Activated T-helper 2 cell treated with anti-CD3 and anti-CD28 coated beads, Interferon-gamma antibody, Interleukin-2, Interleukin-4, amounts not matched to agents 10 μg/mL and 5 μg/mL and 100 μg/mL, durations not matched to agents 14 hours and 24 hours and 36 hours (primary cell): ENCODE measurements at regions of chr1 and their contacts with region 1.

Region 1: GRCh38 chr1:8497210-8497801 is 179.4 kb downstream of the SLC45A1 start:
- DNase-seq: no peak
- H3K4me3 Mint-ChIP-seq: no peak overlapping the region
- H3K27ac Mint-ChIP-seq: peak overlapping the region; percentile 6
- H3K4me1 Mint-ChIP-seq: peaks cover 22% of the 10 kb centered on the region
- H3K27me3 Mint-ChIP-seq: no peaks in the 10 kb centered on the region

Region 2: DNA sequence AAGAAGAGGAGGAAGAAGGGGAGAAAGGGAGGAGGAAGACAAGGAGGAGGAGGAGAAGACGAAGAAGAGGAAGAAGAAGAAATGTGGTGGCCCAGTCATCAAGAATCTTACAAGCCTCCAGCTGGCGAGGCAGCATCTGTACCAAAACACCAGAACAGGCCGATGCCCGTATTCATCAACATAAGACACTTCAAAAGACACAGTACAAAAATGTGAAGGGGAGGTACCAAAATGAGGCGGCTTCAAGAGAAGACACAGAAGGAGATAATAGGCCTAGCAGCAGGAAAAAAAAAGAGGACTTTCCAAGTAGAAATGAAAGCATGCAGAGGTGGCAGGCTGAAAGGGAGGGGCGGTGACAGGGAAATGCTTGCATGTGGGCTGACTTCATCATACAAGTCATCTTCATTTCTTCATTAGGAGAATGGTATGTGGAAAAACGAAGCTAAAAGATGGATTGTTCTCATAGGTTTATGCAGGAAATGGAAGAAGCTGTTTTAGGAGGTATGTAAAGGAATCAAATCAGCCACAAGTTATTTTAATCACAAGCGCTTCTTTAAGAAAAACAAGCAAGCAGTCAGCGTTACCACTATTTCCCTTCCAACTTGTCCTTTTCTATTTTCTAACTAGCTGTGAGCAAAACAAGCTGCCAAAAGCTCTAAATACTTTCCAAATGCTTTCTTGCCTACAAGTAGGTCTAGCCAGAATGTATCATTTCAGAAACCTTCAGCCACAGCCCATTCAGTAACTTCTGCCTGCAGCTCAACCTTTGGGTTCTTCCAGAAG is 12.9 kb after region 1 on chr1:
- intact Hi-C with region 1: loop called (anchors 2 kb)
- DNase-seq: peak; percentile 32
- H3K4me3 Mint-ChIP-seq: peak overlapping the region; percentile 48
- H3K27ac Mint-ChIP-seq: peak overlapping the region; percentile 81
- H3K4me1 Mint-ChIP-seq: peaks cover 41% of the 10 kb centered on the region
- H3K27me3 Mint-ChIP-seq: no peaks in the 10 kb centered on the region